ENCODE measurements at regions of chr9 and their contacts with region 1.

Region 1: DNA sequence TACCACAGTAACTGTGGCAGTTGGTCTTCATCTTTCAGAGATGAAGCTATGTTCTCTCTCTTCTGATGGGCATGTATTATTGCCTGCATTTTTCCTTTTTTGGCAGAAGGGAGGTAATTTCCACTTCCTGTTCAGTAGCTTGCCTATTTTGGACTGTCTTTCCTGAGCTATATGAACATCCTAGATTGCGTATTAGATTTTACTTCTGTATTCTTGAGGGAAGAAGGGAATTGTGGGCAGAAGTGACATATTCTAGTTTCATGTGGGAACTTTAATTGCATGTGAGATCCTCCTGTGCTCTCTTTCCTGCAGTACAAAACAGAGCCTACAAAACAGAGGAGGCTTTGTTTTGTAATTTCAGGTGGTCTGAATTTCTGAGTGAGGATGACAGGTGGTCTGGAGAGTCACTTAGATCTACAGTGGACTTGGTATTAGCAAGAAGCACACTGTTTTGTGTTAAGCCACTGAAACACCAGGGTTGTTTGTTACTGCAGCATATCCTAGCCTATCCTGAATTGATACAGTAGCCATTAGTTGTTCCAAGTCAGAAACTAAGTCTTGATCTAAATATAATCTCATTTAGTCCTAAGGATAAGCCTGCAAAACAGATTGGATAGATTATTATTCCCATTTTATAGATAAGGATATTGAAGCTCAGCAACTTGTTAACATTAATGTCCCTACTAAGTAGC is 68.1 kb downstream of the AOPEP start:
- DNase-seq: no peak
- ATAC-seq: no peak
- H3K4me3 ChIP-seq: no peak overlapping the region
- H3K27ac ChIP-seq: no peak overlapping the region
- H3K4me1 ChIP-seq: peaks cover 9 to 14% of the 10 kb centered on the region in 2 experiments
- H3K27me3 ChIP-seq: no peaks in the 10 kb centered on the region
- CTCF ChIP-seq: no peak
- POLR2A ChIP-seq: no peak
- RAD21 ChIP-seq: no peak

Region 2: GRCh38 chr9:94807556-94807955 is 12.9 kb after region 1 on chr9:
- CTCF ChIA-PET with region 1: interaction called, 3 read pairs
- POLR2A ChIA-PET with region 1: no interaction called
- RAD21 ChIA-PET with region 1: no interaction called
- intact Hi-C with region 1: loop called (anchors 1 kb)
- DNase-seq: no peak
- ATAC-seq: no peak
- H3K4me3 ChIP-seq: no peak overlapping the region
- H3K27ac ChIP-seq: no peak overlapping the region
- H3K4me1 ChIP-seq: peaks cover 21 to 31% of the 10 kb centered on the region in 2 experiments; a peak in 3 of 4 replicates
- H3K27me3 ChIP-seq: no peaks in the 10 kb centered on the region
- CTCF ChIP-seq: no peak
- POLR2A ChIP-seq: no peak
- RAD21 ChIP-seq: no peak

Measured in HCT116 (cell line).